Activated naive CD4-positive, alpha-beta T cell treated with anti-CD3 and anti-CD28 coated beads, Interleukin-2, amount 10 ng/mL, durations not matched to agents 7 days and 5 days (primary cell): ENCODE measurements at regions of chr11 and their contacts with region 1.

Region 1: GRCh38 chr11:122853971-122854446 is 15.7 kb downstream of the CRTAM start:
- DNase-seq: peak; percentile 59
- H3K4me3 Mint-ChIP-seq: no peak overlapping the region
- H3K27ac Mint-ChIP-seq: no peak overlapping the region
- H3K4me1 Mint-ChIP-seq: peaks cover 31% of the 10 kb centered on the region
- H3K27me3 Mint-ChIP-seq: peaks cover 11% of the 10 kb centered on the region

Region 2: DNA sequence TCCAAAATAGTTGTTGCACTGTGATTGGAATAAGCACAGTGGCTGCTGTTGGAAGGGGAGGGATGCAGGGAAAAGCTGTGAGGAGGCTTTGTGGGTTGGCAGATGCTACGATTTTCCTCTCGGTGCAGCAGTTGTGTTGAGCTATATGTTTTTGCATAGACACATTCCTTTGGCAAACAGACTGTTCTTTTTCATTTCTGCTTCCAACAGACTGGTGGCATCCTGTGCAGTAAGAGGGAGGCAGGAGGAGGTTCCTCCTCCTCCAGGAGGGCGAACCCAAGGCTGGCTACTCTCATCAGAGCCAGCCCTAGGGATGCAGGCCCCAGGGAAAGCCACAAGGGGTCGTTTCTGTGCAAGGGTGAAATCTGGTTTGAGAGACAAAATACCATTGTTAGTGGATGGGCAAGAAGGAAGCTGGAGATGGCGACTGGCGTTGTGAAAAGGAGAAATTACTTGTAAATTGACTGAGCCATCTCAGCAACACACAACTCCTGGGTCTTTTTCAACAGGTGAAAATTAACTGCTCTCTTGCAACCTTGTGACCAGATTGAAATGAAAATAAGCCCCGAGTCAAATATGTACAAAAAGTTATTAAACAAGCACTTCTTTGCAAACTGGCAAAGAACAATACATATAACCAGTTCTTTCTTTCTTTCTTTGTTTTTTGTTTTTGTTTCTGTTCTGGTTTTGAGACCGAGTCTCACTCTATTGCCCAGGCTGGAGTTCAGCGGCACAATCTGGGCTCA is 225.0 kb before region 1 on chr11:
- CTCF ChIA-PET with region 1: interaction called, 38 read pairs
- DNase-seq: peak; percentile 77
- H3K4me3 Mint-ChIP-seq: no peak overlapping the region
- H3K27ac Mint-ChIP-seq: no peak overlapping the region
- H3K4me1 Mint-ChIP-seq: peaks cover 13% of the 10 kb centered on the region
- H3K27me3 Mint-ChIP-seq: peaks cover 20% of the 10 kb centered on the region

Region 3: DNA sequence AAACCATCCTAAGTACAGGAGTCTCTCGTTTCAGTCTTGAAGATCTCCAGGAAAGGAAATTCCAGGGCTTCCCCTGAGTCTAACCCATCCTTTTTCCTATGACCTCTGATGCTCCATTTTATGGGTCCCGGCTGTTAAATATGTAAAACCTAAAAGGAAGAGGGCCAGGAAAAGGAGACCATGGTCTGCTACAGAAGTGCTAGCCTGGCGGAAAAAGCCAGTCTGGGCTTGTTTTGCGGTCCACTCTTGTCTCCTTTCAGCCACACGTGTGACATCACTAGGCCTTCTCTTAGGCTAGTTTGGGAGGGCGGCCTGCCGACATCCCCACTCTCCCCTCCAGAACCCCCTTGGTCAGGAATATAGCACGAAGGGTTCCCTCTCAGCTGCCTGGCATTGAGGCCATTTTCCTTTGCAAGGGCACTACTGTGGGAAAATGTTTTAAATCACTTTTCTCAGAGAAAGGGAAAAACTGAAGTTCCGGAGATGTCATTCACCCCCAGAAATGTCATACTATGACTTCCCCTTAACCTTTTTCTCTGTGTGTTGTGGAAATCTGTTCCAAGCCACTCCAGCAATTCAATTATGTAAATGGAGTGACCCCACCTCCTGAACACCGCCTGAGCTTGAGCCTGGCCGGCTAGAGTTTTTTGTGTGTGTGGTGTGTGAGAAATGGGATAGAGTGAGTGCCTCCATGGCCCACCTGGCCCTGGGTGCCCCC is 111.5 kb before region 1 on chr11:
- CTCF ChIA-PET with region 1: no interaction called
- DNase-seq: no peak
- H3K4me3 Mint-ChIP-seq: no peak overlapping the region
- H3K27ac Mint-ChIP-seq: no peak overlapping the region
- H3K4me1 Mint-ChIP-seq: no peaks in the 10 kb centered on the region
- H3K27me3 Mint-ChIP-seq: peaks cover 9% of the 10 kb centered on the region

Region 4: DNA sequence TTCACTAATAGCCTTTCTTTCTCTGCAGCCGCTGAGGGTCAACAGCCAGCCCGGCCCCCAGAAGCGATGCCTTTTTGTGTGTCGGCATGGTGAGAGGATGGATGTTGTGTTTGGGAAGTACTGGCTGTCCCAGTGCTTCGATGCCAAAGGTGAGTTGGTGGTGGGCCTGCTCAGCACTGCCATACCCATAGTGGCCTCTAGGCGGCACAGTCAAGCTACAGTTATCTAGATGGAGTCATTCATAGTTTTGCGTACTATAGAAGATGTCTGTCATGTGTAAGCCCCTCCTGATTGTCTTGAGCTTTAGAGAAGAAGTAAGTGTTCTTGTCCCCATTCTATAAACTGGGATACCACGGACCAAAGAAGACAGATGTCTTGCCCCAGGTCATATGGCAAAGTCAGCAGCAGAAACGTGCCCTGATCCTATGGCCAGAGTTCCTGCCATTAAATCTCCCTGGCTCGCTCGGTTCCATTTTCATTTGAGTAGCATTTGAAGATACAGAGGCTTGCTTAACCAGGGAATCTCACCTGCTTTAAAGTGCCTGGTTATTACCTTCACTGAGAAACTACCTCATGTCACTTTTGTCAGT is 57.8 kb before region 1 on chr11:
- CTCF ChIA-PET with region 1: interaction called, 165 read pairs
- DNase-seq: peak; percentile 79
- H3K4me3 Mint-ChIP-seq: no peak overlapping the region
- H3K27ac Mint-ChIP-seq: no peak overlapping the region
- H3K4me1 Mint-ChIP-seq: no peaks in the 10 kb centered on the region
- H3K27me3 Mint-ChIP-seq: no peaks in the 10 kb centered on the region

Region 5: DNA sequence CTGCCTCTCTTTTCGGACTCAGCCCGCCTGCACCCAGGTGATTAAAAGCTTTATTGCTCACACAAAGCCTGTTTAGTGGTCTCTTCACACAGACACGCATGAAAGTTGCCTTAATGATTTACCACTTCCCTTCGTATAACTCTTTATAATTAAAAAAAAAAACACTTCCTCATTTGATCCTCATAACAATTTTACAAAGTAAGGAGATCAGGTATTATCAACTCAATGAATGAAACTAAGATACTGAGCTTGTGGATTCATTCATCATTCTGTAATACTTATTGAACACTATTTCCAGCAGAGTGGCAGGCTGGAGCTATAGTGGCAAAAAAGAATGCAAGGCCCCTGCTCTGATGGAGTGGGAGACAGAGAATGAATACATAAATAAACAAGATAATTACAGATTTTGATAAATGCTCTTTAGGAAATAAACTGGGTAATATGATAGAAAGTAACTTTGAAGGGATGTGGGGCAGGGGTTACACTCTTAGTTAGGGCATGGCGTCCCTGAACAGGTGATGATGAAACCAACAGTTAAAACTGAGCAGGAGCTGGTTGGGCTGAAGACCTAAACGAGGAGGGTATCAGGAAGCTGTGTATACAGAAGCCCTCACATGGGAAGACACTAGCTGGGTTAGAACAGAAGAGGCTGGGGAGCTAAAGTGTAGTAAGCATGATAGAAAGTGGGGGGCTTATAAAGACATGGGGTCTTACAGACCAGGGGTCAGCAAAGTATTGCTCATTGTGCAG is 21.1 kb before region 1 on chr11:
- CTCF ChIA-PET with region 1: interaction called, 13 read pairs
- DNase-seq: no peak
- H3K4me3 Mint-ChIP-seq: no peak overlapping the region
- H3K27ac Mint-ChIP-seq: no peak overlapping the region
- H3K4me1 Mint-ChIP-seq: peaks cover 3% of the 10 kb centered on the region
- H3K27me3 Mint-ChIP-seq: peaks cover 20% of the 10 kb centered on the region

Region 6: DNA sequence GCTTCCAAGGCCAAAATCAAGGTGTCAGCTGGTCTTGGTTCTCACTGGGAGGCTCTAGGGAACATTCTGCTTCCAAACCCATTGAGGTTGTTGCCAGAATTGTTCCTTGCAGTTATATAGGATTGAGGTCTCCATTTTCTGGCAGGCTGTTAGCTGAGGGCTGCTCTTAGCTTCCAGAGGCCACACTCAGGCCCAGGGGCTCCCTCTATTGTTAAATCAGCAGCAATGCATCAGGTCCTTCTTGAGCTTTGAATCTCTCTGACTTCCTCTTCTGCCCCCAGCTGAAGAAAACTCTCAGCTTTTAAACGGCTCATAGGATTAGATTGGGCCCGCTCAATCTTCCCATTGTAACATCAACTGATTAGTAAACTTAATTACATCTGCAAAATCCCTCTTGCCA is 167.0 kb after region 1 on chr11:
- CTCF ChIA-PET with region 1: interaction called, 50 read pairs
- DNase-seq: peak; percentile 37
- H3K4me3 Mint-ChIP-seq: no peak overlapping the region
- H3K27ac Mint-ChIP-seq: no peak overlapping the region
- H3K4me1 Mint-ChIP-seq: peaks cover 8% of the 10 kb centered on the region
- H3K27me3 Mint-ChIP-seq: peaks cover 40% of the 10 kb centered on the region